ENCODE measurements at regions of chr9 and their contacts with region 1.

Region 1: DNA sequence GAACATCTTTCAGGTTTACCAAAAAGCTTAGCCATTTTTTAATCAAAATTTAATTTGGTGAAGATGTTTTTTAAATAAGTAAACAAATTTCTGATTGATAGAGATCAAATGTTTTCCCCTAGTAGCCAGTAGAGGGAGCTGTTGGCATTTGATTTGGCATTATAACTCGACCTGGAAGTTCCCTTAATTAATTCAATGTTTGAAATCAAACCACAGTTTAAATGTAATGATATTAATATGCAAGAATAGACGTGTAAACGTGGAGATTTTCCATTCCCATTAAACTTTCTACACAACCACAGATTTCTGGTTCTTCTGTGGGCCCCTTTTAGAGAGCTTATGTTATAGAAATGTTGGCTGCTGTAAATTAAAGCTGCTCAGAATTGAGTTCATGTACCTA is 148.1 kb upstream of the MPDZ start:
- DNase-seq: no peak
- ATAC-seq: no peak
- H3K4me3 Mint-ChIP-seq: no peak overlapping the region
- H3K27ac Mint-ChIP-seq: no peak overlapping the region
- H3K4me1 Mint-ChIP-seq: no peaks in the 10 kb centered on the region
- H3K27me3 Mint-ChIP-seq: no peaks in the 10 kb centered on the region

Region 2: GRCh38 chr9:13437866-13438265 is 10.3 kb after region 1 on chr9:
- CTCF ChIA-PET with region 1: interaction called, 10 read pairs
- POLR2A ChIA-PET with region 1: no interaction called
- DNase-seq: no peak
- ATAC-seq: no peak
- H3K4me3 Mint-ChIP-seq: no peak overlapping the region
- H3K27ac Mint-ChIP-seq: no peak overlapping the region
- H3K4me1 Mint-ChIP-seq: no peaks in the 10 kb centered on the region
- H3K27me3 Mint-ChIP-seq: no peaks in the 10 kb centered on the region

Region 3: GRCh38 chr9:13480693-13481092 is 53.1 kb after region 1 on chr9:
- CTCF ChIA-PET with region 1: no interaction called
- POLR2A ChIA-PET with region 1: no interaction called
- DNase-seq: no peak
- ATAC-seq: no peak
- H3K4me3 Mint-ChIP-seq: no peak overlapping the region
- H3K27ac Mint-ChIP-seq: no peak overlapping the region
- H3K4me1 Mint-ChIP-seq: no peaks in the 10 kb centered on the region
- H3K27me3 Mint-ChIP-seq: no peaks in the 10 kb centered on the region

Region 4: GRCh38 chr9:13500034-13500433 is 72.4 kb after region 1 on chr9:
- CTCF ChIA-PET with region 1: no interaction called
- POLR2A ChIA-PET with region 1: no interaction called
- DNase-seq: no peak
- ATAC-seq: no peak
- H3K4me3 Mint-ChIP-seq: no peak overlapping the region
- H3K27ac Mint-ChIP-seq: no peak overlapping the region
- H3K4me1 Mint-ChIP-seq: no peaks in the 10 kb centered on the region
- H3K27me3 Mint-ChIP-seq: no peaks in the 10 kb centered on the region

Region 5: DNA sequence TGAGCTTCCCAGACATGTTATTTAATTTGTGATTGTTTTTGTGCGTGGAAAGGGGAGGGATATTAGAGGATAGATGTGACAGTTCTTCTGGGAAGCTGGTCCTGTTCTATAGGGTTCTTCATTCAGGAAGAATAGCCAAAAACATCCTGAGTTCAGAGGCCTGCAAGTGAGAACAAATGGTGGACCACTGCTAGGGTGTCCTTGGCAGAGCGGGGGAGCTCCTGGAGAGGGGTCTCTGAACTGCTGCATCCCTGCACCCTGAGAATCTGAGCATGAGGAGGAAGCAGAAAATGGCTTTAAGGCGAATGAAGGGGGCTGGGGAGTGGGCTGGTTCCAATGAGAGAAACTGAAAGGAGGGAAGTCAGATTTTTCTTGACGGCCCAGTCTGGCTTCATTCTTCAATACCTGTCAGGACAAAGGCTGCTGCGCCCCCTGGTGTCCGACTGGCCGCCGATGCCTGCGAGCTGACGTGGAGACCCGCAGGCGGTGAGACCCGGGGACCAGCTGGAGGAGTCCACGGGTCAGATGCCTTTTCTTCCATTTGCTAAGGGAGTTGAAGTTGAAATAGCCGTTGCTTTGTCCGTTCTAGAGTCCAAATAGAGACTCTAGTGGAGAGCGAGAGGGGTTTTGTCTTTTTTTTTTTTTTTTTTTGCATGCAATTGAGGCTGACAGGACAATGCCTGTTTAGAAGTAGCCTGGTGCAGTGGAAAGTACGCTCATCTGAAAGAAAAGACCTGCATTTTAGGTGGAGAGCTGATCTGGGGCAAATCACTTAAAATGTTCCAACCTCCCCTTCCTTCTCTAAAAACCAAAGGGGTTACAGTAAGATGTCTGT is 925.9 kb after region 1 on chr9:
- CTCF ChIA-PET with region 1: interaction called, 34 read pairs
- POLR2A ChIA-PET with region 1: no interaction called
- DNase-seq: peak; percentile 83
- ATAC-seq: peak; percentile 67
- H3K4me3 Mint-ChIP-seq: no peak overlapping the region
- H3K27ac Mint-ChIP-seq: no peak overlapping the region
- H3K4me1 Mint-ChIP-seq: peaks cover 4% of the 10 kb centered on the region
- H3K27me3 Mint-ChIP-seq: peaks cover 42% of the 10 kb centered on the region